A549 (cell line): ENCODE measurements at regions of chr9 and their contacts with region 1.

Region 1: DNA sequence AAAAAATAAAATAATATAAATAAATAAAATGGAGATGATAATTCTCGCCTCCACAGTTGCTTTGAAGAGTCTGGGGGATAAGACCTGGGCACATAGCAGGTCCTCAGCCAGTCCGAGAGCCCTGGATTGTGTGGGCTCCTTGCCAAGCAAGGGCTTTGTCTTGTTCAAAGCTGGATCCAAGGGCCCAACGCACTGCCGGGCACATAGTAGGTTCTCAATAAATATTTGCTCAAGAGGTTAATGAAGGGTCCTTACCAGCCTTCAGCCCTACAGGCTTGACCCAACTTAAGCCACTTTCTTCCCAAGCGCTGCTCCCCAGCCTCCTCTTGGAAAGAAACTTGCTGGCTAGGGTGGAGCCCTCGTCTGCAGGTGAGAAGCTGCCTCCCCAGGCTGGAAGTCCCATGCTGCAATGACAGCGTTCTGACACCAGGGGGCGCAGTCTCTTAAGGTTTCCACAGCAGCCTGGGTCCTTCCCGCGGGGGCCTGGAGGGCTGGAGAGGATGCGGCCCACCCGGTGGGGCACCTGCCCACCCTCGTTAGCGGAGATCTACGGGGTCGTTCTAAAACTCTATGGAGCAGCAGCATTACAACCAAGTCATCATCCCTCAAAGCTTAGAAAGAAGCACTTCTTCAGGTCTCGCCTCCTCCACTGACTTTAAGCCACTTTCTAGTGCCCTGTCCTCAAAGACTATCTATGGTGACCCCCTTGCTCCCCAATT is 115.2 kb downstream of the LHX2 start:
- DNase-seq: peak; percentile 71 to 75
- ATAC-seq: peak; percentile 62 to 82; a peak in 5 of 6 replicates
- H3K4me3 ChIP-seq: no peak overlapping the region
- H3K27ac ChIP-seq: peak overlapping the region in 1 of 2 experiments; percentile 47; a peak in 2 of 6 replicates
- H3K4me1 ChIP-seq: peaks cover 14% of the 10 kb centered on the region; the same call in 2 of the 3 replicates
- CTCF ChIP-seq: peak; percentile 91
- EP300 ChIP-seq: no peak
- POLR2A ChIP-seq: no peak
- RAD21 ChIP-seq: peak; percentile 93 to 95

Region 2: GRCh38 chr9:123881604-123882003 is 245.1 kb before region 1 on chr9:
- CTCF ChIA-PET with region 1: no interaction called
- POLR2A ChIA-PET with region 1: no interaction called
- DNase-seq: no peak
- ATAC-seq: no peak
- H3K4me3 ChIP-seq: no peak overlapping the region
- H3K27ac ChIP-seq: no peak overlapping the region
- H3K4me1 ChIP-seq: peaks cover 18% of the 10 kb centered on the region; the same call in 2 of the 3 replicates
- CTCF ChIP-seq: no peak
- EP300 ChIP-seq: no peak
- POLR2A ChIP-seq: no peak
- RAD21 ChIP-seq: no peak

Region 3: GRCh38 chr9:124110307-124110915 is 16.3 kb before region 1 on chr9:
- CTCF ChIA-PET with region 1: interaction called, 43 read pairs
- POLR2A ChIA-PET with region 1: no interaction called
- DNase-seq: peak; percentile 44 to 51
- ATAC-seq: peak; percentile 76 to 77; a peak in 5 of 6 replicates
- H3K4me3 ChIP-seq: no peak overlapping the region
- H3K27ac ChIP-seq: no peak overlapping the region
- H3K4me1 ChIP-seq: no peaks in the 10 kb centered on the region
- CTCF ChIP-seq: no peak
- EP300 ChIP-seq: no peak
- POLR2A ChIP-seq: no peak
- RAD21 ChIP-seq: no peak

Region 4: GRCh38 chr9:124164811-124165210 is 38.1 kb after region 1 on chr9:
- CTCF ChIA-PET with region 1: interaction called, 14 read pairs
- POLR2A ChIA-PET with region 1: no interaction called
- DNase-seq: no peak
- ATAC-seq: no peak; a peak in 1 of 6 replicates
- H3K4me3 ChIP-seq: no peak overlapping the region
- H3K27ac ChIP-seq: no peak overlapping the region
- H3K4me1 ChIP-seq: no peaks in the 10 kb centered on the region
- CTCF ChIP-seq: no peak
- EP300 ChIP-seq: no peak
- POLR2A ChIP-seq: no peak
- RAD21 ChIP-seq: no peak

Region 5: GRCh38 chr9:124267271-124267807 is 140.6 kb after region 1 on chr9:
- CTCF ChIA-PET with region 1: interaction called, 19 read pairs
- POLR2A ChIA-PET with region 1: no interaction called
- DNase-seq: peak; percentile 56 to 79
- ATAC-seq: peak; percentile 79 to 82
- H3K4me3 ChIP-seq: 0 out of 3 replicates have a peak overlapping the region, but pooled peaks have one; percentile 4
- H3K27ac ChIP-seq: peak overlapping the region; percentile 76 to 84
- H3K4me1 ChIP-seq: peaks cover 61% of the 10 kb centered on the region
- CTCF ChIP-seq: no peak
- EP300 ChIP-seq: no peak
- POLR2A ChIP-seq: no peak
- RAD21 ChIP-seq: peak; percentile 14 to 36; a peak in 3 of 5 replicates

Region 6: DNA sequence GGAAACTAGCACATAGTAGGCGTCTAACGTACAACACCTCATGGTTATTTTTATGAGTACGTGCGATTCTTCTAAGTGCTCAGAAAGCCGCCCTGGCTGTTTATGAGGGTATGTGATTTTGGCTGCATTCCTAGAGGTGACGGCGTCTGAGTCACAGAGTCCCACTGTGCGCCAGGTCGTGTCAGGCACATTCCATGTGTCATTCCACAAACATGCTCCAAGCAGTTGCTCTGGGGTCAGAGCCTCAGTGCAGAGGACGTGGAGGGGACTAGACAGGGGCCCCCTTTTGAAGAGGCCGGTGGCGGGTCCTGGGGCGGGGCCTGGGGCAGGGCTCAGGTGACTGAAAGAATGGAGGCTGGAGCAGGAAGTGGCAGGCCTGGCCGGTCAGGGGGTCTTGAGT is 182.9 kb after region 1 on chr9:
- CTCF ChIA-PET with region 1: interaction called, 19 read pairs
- POLR2A ChIA-PET with region 1: no interaction called
- DNase-seq: peak; percentile 88 to 89
- ATAC-seq: peak; percentile 76 to 86
- H3K4me3 ChIP-seq: no peak overlapping the region
- H3K27ac ChIP-seq: peak overlapping the region; percentile 80 to 92
- H3K4me1 ChIP-seq: peaks cover 54% of the 10 kb centered on the region
- CTCF ChIP-seq: no peak
- EP300 ChIP-seq: peak; percentile 59 to 84; a peak in 3 of 5 replicates
- POLR2A ChIP-seq: no peak
- RAD21 ChIP-seq: peak; percentile 25 to 38; a peak in 2 of 5 replicates

Region 7: GRCh38 chr9:124342776-124343485 is 216.2 kb after region 1 on chr9:
- CTCF ChIA-PET with region 1: interaction called, 40 read pairs
- POLR2A ChIA-PET with region 1: no interaction called
- DNase-seq: peak; percentile 29 to 30
- ATAC-seq: peak; percentile 36 to 53; a peak in 4 of 6 replicates
- H3K4me3 ChIP-seq: no peak overlapping the region
- H3K27ac ChIP-seq: peak overlapping the region; percentile 5 to 77; a peak in 4 of 6 replicates
- H3K4me1 ChIP-seq: peaks cover 12% of the 10 kb centered on the region
- CTCF ChIP-seq: no peak
- EP300 ChIP-seq: no peak
- POLR2A ChIP-seq: no peak
- RAD21 ChIP-seq: no peak

Region 8: GRCh38 chr9:124593651-124594058 is 466.9 kb after region 1 on chr9:
- CTCF ChIA-PET with region 1: no interaction called
- POLR2A ChIA-PET with region 1: no interaction called
- DNase-seq: no peak
- ATAC-seq: no peak
- H3K4me3 ChIP-seq: no peak overlapping the region
- H3K27ac ChIP-seq: no peak overlapping the region
- H3K4me1 ChIP-seq: peaks cover 21% of the 10 kb centered on the region; the same call in 2 of the 3 replicates
- CTCF ChIP-seq: no peak
- EP300 ChIP-seq: no peak
- POLR2A ChIP-seq: no peak
- RAD21 ChIP-seq: no peak